Endothelial cell of umbilical vein (primary cell): ENCODE measurements at regions of chr1 and their contacts with region 1.

Region 1: DNA sequence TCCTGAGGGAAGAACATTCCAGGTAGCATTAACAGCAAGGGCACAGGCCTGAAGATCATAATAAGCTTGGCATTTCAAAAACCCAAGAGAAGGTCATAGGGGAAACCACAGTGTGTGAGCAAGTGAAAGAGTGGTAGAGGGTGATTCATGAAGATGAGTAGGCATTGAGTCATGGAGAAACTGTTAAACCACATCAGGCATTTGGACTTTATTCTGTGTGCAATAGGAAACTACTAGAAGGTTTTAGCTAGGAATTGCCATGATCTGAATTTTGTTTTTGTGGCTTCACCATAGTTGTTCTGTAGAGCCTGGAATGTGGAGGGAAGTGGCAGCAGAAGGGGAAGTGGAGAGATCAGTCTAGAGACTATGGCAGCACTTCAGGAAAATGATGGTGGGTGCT is 359.0 kb upstream of the PTBP2 start:
- DNase-seq: peak; percentile 84
- H3K4me3 ChIP-seq: no peak overlapping the region
- H3K27ac ChIP-seq: peak overlapping the region; percentile 53
- H3K4me1 ChIP-seq: peaks cover 39% of the 10 kb centered on the region
- H3K27me3 ChIP-seq: no peaks in the 10 kb centered on the region
- CTCF ChIP-seq: no peak
- POLR2A ChIP-seq: no peak

Region 2: GRCh38 chr1:96340686-96341085 is 21.9 kb before region 1 on chr1:
- CTCF ChIA-PET with region 1: no interaction called
- POLR2A ChIA-PET with region 1: no interaction called
- dilution Hi-C with region 1: no loop called
- intact Hi-C with region 1: no loop called
- DNase-seq: no peak
- H3K4me3 ChIP-seq: no peak overlapping the region
- H3K27ac ChIP-seq: no peak overlapping the region
- H3K4me1 ChIP-seq: no peaks in the 10 kb centered on the region
- H3K27me3 ChIP-seq: no peaks in the 10 kb centered on the region
- CTCF ChIP-seq: no peak
- POLR2A ChIP-seq: no peak

Region 3: GRCh38 chr1:96388421-96389310 is 26.0 kb after region 1 on chr1:
- CTCF ChIA-PET with region 1: interaction called, 6 read pairs
- POLR2A ChIA-PET with region 1: no interaction called
- dilution Hi-C with region 1: no loop called
- intact Hi-C with region 1: loop called (anchors 2 kb)
- DNase-seq: peak; percentile 98
- H3K4me3 ChIP-seq: no peak overlapping the region
- H3K27ac ChIP-seq: peak overlapping the region; percentile 93
- H3K4me1 ChIP-seq: peaks cover 22% of the 10 kb centered on the region
- H3K27me3 ChIP-seq: no peaks in the 10 kb centered on the region
- CTCF ChIP-seq: no peak
- POLR2A ChIP-seq: peak; percentile 36